MCF 10A (cell line): ENCODE measurements at regions of chr1 and their contacts with region 1.

Region 1: DNA sequence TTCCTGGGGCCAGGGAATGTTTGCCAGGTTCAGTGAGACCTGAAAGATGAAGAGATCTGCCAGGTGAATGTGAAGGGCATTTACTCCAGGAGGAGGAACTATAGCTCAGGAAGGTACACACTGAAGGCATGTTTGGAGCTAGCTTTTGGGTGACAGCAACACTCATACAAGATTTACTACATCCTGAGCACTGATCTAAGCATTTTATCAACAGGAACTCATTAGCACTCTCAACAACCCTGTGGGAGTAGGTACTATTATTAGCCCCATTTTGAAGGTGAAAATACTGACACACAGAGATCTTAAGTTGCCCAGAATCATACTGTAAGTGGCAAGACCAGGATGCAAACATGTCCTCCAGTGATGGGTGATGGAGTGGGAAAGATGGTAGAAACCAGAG is 6.7 kb downstream of the GADD45A start:
- DNase-seq: no peak
- H3K4me3 Mint-ChIP-seq: no peak overlapping the region
- H3K27ac Mint-ChIP-seq: no peak overlapping the region
- H3K4me1 Mint-ChIP-seq: peaks cover 14% of the 10 kb centered on the region
- H3K27me3 Mint-ChIP-seq: no peaks in the 10 kb centered on the region
- CTCF ChIP-seq: no peak

Region 2: DNA sequence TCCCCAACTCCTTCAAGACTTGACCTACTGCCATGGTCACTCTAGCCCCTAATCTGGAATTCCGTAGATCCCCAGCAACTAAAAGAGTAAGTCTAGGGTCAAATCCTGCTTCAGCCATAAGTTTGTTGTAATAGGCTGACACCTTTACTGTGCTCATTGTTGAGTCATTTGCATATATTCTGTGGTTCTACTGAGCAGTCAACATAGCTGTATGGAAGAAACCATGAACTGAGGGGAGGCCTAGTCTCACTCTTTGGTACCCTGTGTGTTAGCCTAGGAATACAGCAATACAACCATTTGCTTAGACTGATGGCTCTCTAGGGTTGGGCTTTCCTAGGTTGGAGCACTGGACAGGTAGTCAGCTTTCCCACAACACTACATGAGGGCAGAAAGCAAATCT is 614.1 kb before region 1 on chr1:
- CTCF ChIA-PET with region 1: no interaction called
- POLR2A ChIA-PET with region 1: no interaction called
- intact Hi-C with region 1: no loop called
- DNase-seq: no peak
- H3K4me3 Mint-ChIP-seq: no peak overlapping the region
- H3K27ac Mint-ChIP-seq: no peak overlapping the region
- H3K4me1 Mint-ChIP-seq: no peaks in the 10 kb centered on the region
- H3K27me3 Mint-ChIP-seq: no peaks in the 10 kb centered on the region
- CTCF ChIP-seq: no peak

Region 3: DNA sequence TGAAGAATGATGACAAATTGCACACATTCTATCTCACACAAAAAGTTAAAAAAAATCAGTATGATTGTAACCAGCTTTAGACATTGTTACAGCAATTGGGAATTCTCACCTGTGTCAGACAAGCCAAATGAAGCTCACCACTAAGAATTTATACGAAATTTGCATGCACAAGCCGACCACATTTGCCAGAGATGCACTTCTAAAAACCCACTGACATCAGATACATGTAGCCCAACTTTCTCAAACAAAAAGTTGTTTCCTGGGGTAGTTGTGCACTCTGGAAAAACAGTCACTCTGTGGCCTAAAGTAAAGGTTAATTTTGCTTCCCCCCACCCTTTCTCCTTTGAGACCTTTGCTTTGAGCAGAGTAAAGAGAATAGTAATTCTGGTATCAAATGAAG is 452.0 kb before region 1 on chr1:
- CTCF ChIA-PET with region 1: no interaction called
- POLR2A ChIA-PET with region 1: no interaction called
- intact Hi-C with region 1: no loop called
- DNase-seq: no peak
- H3K4me3 Mint-ChIP-seq: no peak overlapping the region
- H3K27ac Mint-ChIP-seq: no peak overlapping the region
- H3K4me1 Mint-ChIP-seq: no peaks in the 10 kb centered on the region
- H3K27me3 Mint-ChIP-seq: no peaks in the 10 kb centered on the region
- CTCF ChIP-seq: no peak

Region 4: DNA sequence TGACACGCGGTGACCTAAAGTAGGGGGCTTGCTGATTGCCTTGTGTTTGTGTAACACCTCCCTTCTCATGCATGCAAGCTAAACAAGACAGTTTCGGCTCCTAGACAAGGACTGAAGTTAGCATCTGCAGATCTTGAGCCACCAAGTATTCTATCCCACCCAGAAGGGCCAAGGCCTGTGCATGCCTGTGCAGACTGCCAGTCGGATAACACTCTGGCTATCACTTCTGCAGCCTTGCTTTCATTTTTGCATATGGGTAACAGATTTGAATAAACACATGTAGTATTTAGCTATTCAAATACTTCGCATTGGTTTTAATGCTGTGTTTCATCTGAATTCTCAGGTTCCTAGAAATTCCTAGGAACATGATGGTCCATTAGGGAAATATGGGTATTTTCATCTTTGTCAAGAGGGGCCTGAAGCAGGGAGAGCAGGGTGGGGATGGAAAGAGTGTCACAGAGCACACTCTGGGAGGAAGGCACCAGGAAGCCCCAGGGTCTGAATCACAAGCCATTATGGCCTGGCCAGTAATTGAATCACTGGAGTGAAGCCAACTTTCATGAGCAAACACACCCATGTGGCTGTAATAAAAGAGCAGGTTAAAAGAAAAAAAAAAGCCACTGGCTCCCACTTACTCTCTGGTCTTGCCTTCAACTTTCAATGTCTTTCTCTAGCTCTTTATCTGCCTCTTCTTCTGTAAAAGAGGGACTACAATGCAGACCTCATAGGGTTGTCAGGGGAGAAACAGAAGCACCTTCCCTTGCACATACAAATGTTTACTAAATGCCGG is 21.5 kb after region 1 on chr1:
- CTCF ChIA-PET with region 1: interaction called, 3 read pairs
- POLR2A ChIA-PET with region 1: interaction called, 130 read pairs
- intact Hi-C with region 1: loop called (anchors 2 kb)
- DNase-seq: peak; percentile 85
- H3K4me3 Mint-ChIP-seq: no peak overlapping the region
- H3K27ac Mint-ChIP-seq: peak overlapping the region; percentile 87
- H3K4me1 Mint-ChIP-seq: peaks cover 52% of the 10 kb centered on the region
- H3K27me3 Mint-ChIP-seq: no peaks in the 10 kb centered on the region
- CTCF ChIP-seq: no peak